ENCODE measurements at regions of chr4 and their contacts with region 1.

Region 1: DNA sequence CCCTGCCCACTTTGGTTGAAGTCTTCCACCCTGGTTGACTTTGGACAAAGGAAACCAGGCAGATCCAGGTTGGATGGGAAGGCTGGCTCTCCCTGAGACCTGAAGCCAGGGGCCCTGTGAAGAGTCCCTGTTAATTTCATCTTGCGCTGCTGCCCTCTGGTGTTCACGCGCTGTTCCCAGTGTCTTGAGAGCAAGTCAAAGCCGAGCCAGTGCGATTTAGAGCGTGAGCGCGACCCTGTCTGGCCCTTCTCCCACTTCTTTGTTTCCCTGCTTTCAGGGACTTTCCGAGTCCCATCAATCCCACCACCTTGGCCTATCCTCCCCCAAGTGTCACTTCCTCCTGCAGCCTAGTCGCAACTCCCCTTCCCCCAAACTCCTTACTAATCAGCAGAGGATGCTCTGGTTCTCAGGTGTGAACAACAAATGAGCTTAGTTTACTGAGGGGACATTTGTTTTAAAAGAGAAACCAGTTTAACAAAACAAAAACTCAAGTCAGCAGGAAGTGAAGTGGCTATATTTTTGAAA is 25.8 kb upstream of the CHRNA9 start:
- DNase-seq: peak; percentile 94
- H3K4me3 Mint-ChIP-seq: peak overlapping the region; percentile 54
- H3K27ac Mint-ChIP-seq: peak overlapping the region; percentile 80
- H3K4me1 Mint-ChIP-seq: peaks cover 72% of the 10 kb centered on the region
- H3K27me3 Mint-ChIP-seq: no peaks in the 10 kb centered on the region

Region 2: DNA sequence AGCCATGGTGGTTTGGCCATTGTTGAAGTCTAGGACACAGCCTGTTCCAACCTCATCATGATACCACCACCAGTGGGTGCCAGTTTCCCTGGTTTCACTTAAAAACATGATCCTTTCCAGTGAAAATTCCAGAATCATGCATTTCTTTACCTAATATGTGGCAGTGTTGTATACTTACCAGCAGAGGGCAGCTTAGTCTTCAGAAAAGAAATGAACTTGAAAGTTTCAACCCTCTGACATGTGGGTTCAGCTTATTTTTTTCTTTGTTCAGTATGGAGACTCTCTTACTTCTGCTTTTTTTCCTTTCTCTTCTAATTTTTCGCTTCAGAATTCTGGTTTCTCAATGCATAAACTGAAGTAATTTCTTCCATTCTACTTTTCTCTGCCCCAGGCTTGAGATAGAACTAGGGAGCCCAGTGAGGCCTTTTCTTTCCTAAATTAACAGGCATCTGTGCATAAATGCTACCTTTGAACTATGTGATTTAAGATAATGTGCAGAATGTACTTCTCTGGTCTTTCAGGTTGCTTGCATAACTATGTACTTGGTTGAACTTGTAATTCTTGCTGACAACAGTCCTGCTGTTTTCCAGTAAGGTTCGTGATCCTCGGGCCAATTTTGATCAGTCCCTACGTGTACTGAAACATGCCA is 839.8 kb before region 1 on chr4:
- CTCF ChIA-PET with region 1: no interaction called
- POLR2A ChIA-PET with region 1: no interaction called
- intact Hi-C with region 1: loop called (anchors 10 kb)
- DNase-seq: peak; percentile 12
- H3K4me3 Mint-ChIP-seq: no peak overlapping the region
- H3K27ac Mint-ChIP-seq: no peak overlapping the region
- H3K4me1 Mint-ChIP-seq: peaks cover 9% of the 10 kb centered on the region
- H3K27me3 Mint-ChIP-seq: no peaks in the 10 kb centered on the region

Region 3: GRCh38 chr4:40056716-40057585 is 252.4 kb before region 1 on chr4 and contains the start of gene N4BP2:
- CTCF ChIA-PET with region 1: interaction called, 17 read pairs
- POLR2A ChIA-PET with region 1: interaction called, 6 read pairs
- intact Hi-C with region 1: loop called (anchors 2 kb)
- DNase-seq: peak; percentile 78
- H3K4me3 Mint-ChIP-seq: peak within 1 kb of the TSS; percentile 92
- H3K27ac Mint-ChIP-seq: peak within 1 kb of the TSS; percentile 98
- H3K4me1 Mint-ChIP-seq: peaks cover 32% of the 10 kb centered on the region
- H3K27me3 Mint-ChIP-seq: no peaks in the 10 kb centered on the region
- total RNA-seq, gene N4BP2: 19.3 to 21.9 TPM

Region 4: DNA sequence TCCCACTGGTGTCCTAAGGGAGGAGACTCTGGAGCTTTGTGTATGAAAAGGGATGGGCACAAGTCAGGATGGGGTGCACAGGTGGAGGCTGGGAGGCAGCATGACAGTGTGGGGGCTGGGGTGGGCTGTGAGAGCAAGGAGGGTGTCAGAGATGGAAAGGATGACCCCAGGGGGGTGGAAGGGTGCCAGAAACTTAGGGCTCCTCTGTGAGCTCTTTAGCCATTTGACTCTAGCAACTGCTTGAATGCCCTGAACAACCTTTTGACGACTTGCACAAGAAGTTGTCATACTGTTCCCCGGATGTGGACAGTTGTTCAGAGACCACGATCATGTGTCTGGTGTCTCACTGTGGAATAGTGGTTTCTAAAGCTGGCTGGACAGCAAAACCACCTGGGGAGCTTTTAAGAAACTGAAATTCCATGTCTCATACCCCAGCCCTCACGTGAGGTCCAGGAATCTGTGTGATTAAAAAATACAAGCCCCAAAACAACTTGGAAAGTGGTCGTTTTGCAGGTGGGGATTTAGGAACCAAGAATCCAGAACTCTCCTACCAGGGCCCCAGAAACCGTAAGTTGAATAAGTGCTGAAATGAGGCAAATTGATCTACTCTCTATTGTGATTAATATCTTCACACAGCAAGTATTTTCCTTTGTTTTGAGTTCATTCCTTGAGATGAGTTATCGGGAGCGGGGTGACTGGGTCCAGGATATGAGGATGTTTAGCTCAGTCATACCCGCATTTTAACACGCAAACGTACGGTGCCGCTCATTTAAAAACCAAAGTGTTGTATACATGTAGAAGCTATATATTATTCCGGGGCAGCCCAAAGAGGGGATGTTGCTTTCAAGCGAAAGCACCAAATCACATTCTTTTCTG is 109.1 kb before region 1 on chr4:
- CTCF ChIA-PET with region 1: interaction called, 18 read pairs
- POLR2A ChIA-PET with region 1: interaction called, 57 read pairs
- intact Hi-C with region 1: loop called (anchors 1 kb)
- DNase-seq: peak; percentile 91
- H3K4me3 Mint-ChIP-seq: peak overlapping the region; percentile 93
- H3K27ac Mint-ChIP-seq: peak overlapping the region; percentile 98
- H3K4me1 Mint-ChIP-seq: peaks cover 39% of the 10 kb centered on the region
- H3K27me3 Mint-ChIP-seq: no peaks in the 10 kb centered on the region

Region 5: GRCh38 chr4:40228497-40229365 is 80.6 kb before region 1 on chr4:
- CTCF ChIA-PET with region 1: interaction called, 106 read pairs
- POLR2A ChIA-PET with region 1: interaction called, 32 read pairs
- intact Hi-C with region 1: loop called (anchors 1 kb)
- DNase-seq: peak; percentile 56
- H3K4me3 Mint-ChIP-seq: peak overlapping the region; percentile 58
- H3K27ac Mint-ChIP-seq: peak overlapping the region; percentile 92
- H3K4me1 Mint-ChIP-seq: peaks cover 93% of the 10 kb centered on the region
- H3K27me3 Mint-ChIP-seq: no peaks in the 10 kb centered on the region

Region 6: GRCh38 chr4:40283968-40284367 is 25.3 kb before region 1 on chr4:
- CTCF ChIA-PET with region 1: interaction called, 16 read pairs
- POLR2A ChIA-PET with region 1: interaction called, 5 read pairs
- intact Hi-C with region 1: loop called (anchors 1 kb)
- DNase-seq: peak; percentile 92
- H3K4me3 Mint-ChIP-seq: peak overlapping the region; percentile 55
- H3K27ac Mint-ChIP-seq: peak overlapping the region; percentile 82
- H3K4me1 Mint-ChIP-seq: peaks cover 60% of the 10 kb centered on the region
- H3K27me3 Mint-ChIP-seq: no peaks in the 10 kb centered on the region

Region 7: DNA sequence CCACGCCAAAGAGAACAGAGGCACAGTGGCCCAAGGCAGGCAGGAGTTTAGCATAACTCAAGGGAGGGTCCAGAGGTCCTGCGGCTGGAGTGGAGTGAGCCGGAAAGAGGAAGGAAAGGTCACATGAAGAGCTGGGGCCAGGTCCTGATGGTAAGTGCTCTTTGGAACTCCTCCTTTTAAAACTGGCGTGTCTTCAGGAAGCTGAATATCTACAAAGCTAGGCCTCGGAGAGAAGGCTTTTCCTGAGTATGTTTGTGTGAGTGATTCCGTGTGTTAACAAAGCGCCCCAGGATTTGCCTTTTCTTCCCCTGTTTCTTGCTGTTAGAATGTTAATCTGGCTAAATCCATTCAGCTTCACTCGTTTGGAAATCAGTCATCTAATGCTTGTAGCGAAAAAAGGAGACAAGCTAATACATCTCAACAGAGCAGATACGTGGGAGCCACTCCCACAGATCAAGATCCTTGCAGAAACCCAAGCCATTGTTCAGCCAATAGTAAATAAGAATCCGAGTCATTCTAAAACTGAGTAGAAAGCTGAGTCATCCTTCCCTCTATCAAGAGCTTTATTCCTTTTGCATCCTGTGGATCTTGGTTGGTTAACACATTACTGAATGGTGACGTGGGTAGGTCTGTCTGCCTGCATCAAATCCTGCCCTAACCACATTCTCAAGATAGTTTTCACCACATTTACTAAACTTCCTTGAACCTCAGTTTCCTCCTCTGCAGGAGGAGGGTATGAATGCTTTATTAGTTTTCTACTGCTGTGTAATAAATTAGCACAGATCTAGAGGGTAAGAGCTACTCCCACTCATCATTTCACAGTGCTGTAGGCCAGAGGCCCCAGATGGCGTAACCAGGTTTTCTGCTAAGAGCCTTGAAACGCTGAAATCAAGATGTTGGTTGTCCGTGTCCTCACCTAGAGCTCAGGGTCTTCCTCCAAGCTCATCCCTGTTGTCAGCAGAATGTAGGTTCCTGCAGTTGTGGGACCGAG is 363.5 kb after region 1 on chr4:
- CTCF ChIA-PET with region 1: no interaction called
- POLR2A ChIA-PET with region 1: no interaction called
- intact Hi-C with region 1: loop called (anchors 5 kb)
- DNase-seq: peak; percentile 71
- H3K4me3 Mint-ChIP-seq: peak overlapping the region; percentile 63
- H3K27ac Mint-ChIP-seq: peak overlapping the region; percentile 92
- H3K4me1 Mint-ChIP-seq: peaks cover 50% of the 10 kb centered on the region
- H3K27me3 Mint-ChIP-seq: no peaks in the 10 kb centered on the region

Measured in activated CD4-positive, alpha-beta memory T cell treated with anti-CD3 and anti-CD28 coated beads for 36 hours (primary cell).